Activated CD8-positive, alpha-beta T cell treated with anti-CD3 and anti-CD28 coated beads for 36 hours (primary cell): ENCODE measurements at regions of chr6 and their contacts with region 1.

Region 1: DNA sequence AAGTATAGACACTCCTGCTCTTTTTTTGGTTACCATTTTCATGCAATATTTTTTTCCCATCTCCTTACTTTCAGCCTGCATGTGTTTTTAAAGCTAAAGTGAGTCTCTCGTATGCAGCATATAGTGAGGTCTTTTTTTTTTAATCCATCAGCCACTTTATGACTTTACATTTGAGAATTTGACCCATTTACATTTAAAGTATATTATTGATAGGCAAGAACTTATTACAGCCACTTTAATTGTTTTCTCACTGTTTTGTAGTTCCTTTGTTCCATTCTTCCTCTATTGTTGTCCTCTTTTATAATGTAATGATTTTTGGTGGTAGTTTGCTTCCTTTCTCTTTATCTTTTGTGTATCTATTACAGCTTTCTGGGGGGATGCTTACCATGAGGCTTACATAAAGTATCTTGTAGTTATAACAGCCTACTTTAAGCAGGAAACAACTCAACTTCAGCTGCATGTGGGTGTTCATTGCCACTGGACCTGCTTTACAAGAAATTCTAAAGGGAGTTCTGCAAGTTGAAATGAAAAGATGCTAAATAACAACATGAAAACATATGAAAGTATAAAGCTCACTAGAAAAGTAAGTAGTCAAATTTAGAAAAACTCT is 71.8 kb downstream of the TNFAIP3 start:
- DNase-seq: no peak
- ATAC-seq: no peak
- H3K4me3 Mint-ChIP-seq: peak overlapping the region; percentile 39
- H3K27ac Mint-ChIP-seq: peak overlapping the region; percentile 92
- H3K4me1 Mint-ChIP-seq: peaks cover 44% of the 10 kb centered on the region
- H3K27me3 Mint-ChIP-seq: no peaks in the 10 kb centered on the region
- CTCF ChIP-seq: no peak

Region 2: GRCh38 chr6:137951064-137951597 is 12.3 kb after region 1 on chr6:
- CTCF ChIA-PET with region 1: interaction called, 25 read pairs
- POLR2A ChIA-PET with region 1: interaction called, 9 read pairs
- intact Hi-C with region 1: no loop called
- DNase-seq: no peak
- ATAC-seq: no peak
- H3K4me3 Mint-ChIP-seq: no peak overlapping the region
- H3K27ac Mint-ChIP-seq: peak overlapping the region; percentile 28
- H3K4me1 Mint-ChIP-seq: peaks cover 16% of the 10 kb centered on the region
- H3K27me3 Mint-ChIP-seq: no peaks in the 10 kb centered on the region
- CTCF ChIP-seq: no peak